ENCODE measurements at regions of chr9 and their contacts with region 1.

Region 1: DNA sequence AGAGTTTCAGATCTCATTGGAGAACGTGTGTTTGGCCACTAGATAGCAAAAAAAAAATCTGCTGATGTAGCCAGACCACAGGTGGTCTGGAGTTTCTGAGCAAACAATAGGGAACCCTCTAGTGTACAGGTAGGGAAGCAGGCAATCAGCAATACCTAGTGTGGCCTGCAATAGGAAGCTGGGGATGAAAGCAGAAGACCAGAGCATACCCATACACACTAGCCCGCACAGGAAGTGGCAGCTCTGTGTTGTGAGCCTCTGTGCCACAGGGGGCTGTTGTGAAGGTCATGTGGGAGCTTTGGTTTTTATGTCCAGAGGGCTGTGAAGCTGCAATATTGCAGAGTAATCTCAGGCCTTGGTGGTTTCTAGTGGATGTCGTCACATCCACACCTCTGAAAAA is 81.2 kb downstream of the MTAP start:
- DNase-seq: peak; percentile 20 to 39
- ATAC-seq: peak; percentile 93 to 99 (median 94)
- H3K4me3 ChIP-seq: no peak overlapping the region
- H3K4me3 Mint-ChIP-seq: no peak overlapping the region
- H3K27ac ChIP-seq: no peak overlapping the region
- H3K27ac Mint-ChIP-seq: peak overlapping the region; percentile 11 to 69
- H3K4me1 ChIP-seq: peaks cover 7% of the 10 kb centered on the region
- H3K4me1 Mint-ChIP-seq: peaks cover 21 to 22% of the 10 kb centered on the region in 2 donors
- H3K27me3 ChIP-seq: no peaks in the 10 kb centered on the region
- H3K27me3 Mint-ChIP-seq: no peaks in the 10 kb centered on the region
- CTCF ChIP-seq: no peak

Region 2: GRCh38 chr9:21919377-21920362 is 36.0 kb after region 1 on chr9:
- intact Hi-C with region 1: loop called (anchors 5 kb)
- DNase-seq: peak in 1 of 2 donors; percentile 79
- ATAC-seq: peak; percentile 86 to 95 (median 94)
- H3K4me3 ChIP-seq: no peak overlapping the region
- H3K4me3 Mint-ChIP-seq: peak overlapping the region; percentile 45
- H3K27ac ChIP-seq: peak overlapping the region; percentile 42
- H3K27ac Mint-ChIP-seq: peak overlapping the region; percentile 48 to 80
- H3K4me1 ChIP-seq: no peaks in the 10 kb centered on the region
- H3K4me1 Mint-ChIP-seq: peaks cover 17 to 18% of the 10 kb centered on the region in 2 donors
- H3K27me3 ChIP-seq: no peaks in the 10 kb centered on the region
- H3K27me3 Mint-ChIP-seq: no peaks in the 10 kb centered on the region
- CTCF ChIP-seq: no peak

Region 3: DNA sequence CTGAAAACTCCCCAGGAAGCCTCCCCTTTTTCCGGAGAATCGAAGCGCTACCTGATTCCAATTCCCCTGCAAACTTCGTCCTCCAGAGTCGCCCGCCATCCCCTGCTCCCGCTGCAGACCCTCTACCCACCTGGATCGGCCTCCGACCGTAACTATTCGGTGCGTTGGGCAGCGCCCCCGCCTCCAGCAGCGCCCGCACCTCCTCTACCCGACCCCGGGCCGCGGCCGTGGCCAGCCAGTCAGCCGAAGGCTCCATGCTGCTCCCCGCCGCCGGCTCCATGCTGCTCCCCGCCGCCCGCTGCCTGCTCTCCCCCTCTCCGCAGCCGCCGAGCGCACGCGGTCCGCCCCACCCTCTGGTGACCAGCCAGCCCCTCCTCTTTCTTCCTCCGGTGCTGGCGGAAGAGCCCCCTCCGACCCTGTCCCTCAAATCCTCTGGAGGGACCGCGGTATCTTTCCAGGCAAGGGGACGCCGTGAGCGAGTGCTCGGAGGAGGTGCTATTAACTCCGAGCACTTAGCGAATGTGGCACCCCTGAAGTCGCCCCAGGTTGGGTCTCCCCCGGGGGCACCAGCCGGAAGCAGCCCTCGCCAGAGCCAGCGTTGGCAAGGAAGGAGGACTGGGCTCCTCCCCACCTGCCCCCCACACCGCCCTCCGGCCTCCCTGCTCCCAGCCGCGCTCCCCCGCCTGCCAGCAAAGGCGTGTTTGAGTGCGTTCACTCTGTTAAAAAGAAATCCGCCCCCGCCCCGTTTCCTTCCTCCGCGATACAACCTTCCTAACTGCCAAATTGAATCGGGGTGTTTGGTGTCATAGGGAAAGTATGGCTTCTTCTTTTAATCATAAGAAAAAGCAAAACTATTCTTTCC is 91.1 kb after region 1 on chr9:
- intact Hi-C with region 1: loop called (anchors 10 kb)
- DNase-seq: peak in 1 of 2 donors; percentile 58
- ATAC-seq: peak; percentile 57 to 72 (median 70)
- H3K4me3 ChIP-seq: peak overlapping the region; percentile 30
- H3K4me3 Mint-ChIP-seq: peak overlapping the region; percentile 76
- H3K27ac ChIP-seq: no peak overlapping the region
- H3K27ac Mint-ChIP-seq: peak overlapping the region in 1 of 2 donors; percentile 29
- H3K4me1 ChIP-seq: peaks cover 19% of the 10 kb centered on the region
- H3K4me1 Mint-ChIP-seq: peaks cover 20 to 22% of the 10 kb centered on the region in 2 donors
- H3K27me3 ChIP-seq: peaks cover 94% of the 10 kb centered on the region
- H3K27me3 Mint-ChIP-seq: peaks cover 81 to 90% of the 10 kb centered on the region in 2 donors
- CTCF ChIP-seq: no peak